GM12878 (cell line): ENCODE measurements at regions of chr7 and their contacts with region 1.

Region 1: GRCh38 chr7:101815835-101816493 is 1.5 kb upstream of the CUX1 start:
- DNase-seq: no peak
- ATAC-seq: peak; percentile 63
- H3K4me3 ChIP-seq: peak overlapping the region; percentile 53; the same call in 1 of the 2 replicates
- H3K27ac ChIP-seq: peak overlapping the region; percentile 68
- H3K4me1 ChIP-seq: peaks cover 4% of the 10 kb centered on the region; the same call in 1 of the 2 replicates
- H3K27me3 ChIP-seq: no peaks in the 10 kb centered on the region
- CTCF ChIP-seq: peak in 1 of 3 experiments; percentile 19; a peak in 2 of 6 replicates
- EP300 ChIP-seq: no peak
- POLR2A ChIP-seq: peak; percentile 69
- RAD21 ChIP-seq: no peak

Region 2: GRCh38 chr7:101542527-101543241 is 273.3 kb before region 1 on chr7:
- CTCF ChIA-PET with region 1: no interaction called
- POLR2A ChIA-PET with region 1: no interaction called
- RAD21 ChIA-PET with region 1: interaction called, 7 read pairs
- SMC1A ChIA-PET with region 1: no interaction called
- in situ Hi-C with region 1: no loop called
- intact Hi-C with region 1: loop called (anchors 10 kb)
- DNase-seq: peak; percentile 2
- ATAC-seq: peak; percentile 79
- H3K4me3 ChIP-seq: no peak overlapping the region
- H3K27ac ChIP-seq: no peak overlapping the region
- H3K4me1 ChIP-seq: no peaks in the 10 kb centered on the region
- H3K27me3 ChIP-seq: no peaks in the 10 kb centered on the region
- CTCF ChIP-seq: peak; percentile 80 to 85 (median 82)
- EP300 ChIP-seq: no peak
- POLR2A ChIP-seq: no peak
- RAD21 ChIP-seq: peak; percentile 92

Region 3: GRCh38 chr7:101688183-101688831 is 127.7 kb before region 1 on chr7:
- CTCF ChIA-PET with region 1: interaction called, 11 read pairs
- POLR2A ChIA-PET with region 1: interaction called, 3 read pairs
- RAD21 ChIA-PET with region 1: interaction called, 13 read pairs
- SMC1A ChIA-PET with region 1: interaction called, 12 read pairs
- in situ Hi-C with region 1: loop called (anchors 5 kb)
- intact Hi-C with region 1: loop called (anchors 1 kb)
- DNase-seq: no peak
- ATAC-seq: peak; percentile 97
- H3K4me3 ChIP-seq: peak overlapping the region; percentile 32; the same call in 1 of the 2 replicates
- H3K27ac ChIP-seq: peak overlapping the region; percentile 58
- H3K4me1 ChIP-seq: peaks cover 6% of the 10 kb centered on the region; the same call in 1 of the 2 replicates
- H3K27me3 ChIP-seq: no peaks in the 10 kb centered on the region
- CTCF ChIP-seq: peak; percentile 73 to 97 (median 79)
- EP300 ChIP-seq: no peak
- POLR2A ChIP-seq: no peak
- RAD21 ChIP-seq: peak; percentile 89

Region 4: DNA sequence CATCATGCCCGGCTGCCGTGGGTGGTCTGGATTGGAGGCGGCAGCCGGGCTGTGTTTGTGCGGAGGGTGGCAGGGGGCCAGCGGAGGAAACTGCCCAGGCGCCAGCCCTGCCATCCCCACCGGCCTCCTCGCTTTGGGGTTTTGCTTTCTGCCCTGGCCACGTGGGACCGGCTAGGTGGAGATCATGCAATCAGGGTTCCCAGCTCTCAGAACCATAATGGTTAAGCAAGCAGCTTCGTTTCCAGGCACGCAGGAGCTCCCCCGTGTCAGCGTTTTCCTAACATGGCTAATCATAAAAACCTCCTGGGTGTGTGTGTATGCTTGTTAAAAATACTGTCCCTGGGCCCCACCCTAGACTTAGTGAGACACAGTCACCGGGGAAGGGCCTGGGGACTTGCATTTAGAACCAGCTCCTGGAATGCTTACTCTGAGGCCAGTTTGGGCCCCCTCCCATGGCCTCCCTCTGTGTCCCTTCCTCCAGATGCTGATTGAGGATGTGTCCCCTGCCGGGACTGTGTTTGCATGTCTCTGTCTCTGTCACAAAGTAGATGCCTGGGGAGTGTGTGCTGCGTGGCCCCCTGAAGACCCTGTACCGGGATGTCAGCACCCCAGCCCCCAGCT is 120.8 kb after region 1 on chr7:
- CTCF ChIA-PET with region 1: no interaction called
- POLR2A ChIA-PET with region 1: no interaction called
- RAD21 ChIA-PET with region 1: interaction called, 4 read pairs
- SMC1A ChIA-PET with region 1: interaction called, 4 read pairs
- in situ Hi-C with region 1: no loop called
- intact Hi-C with region 1: loop called (anchors 5 kb)
- DNase-seq: no peak
- ATAC-seq: no peak
- H3K4me3 ChIP-seq: no peak overlapping the region
- H3K27ac ChIP-seq: no peak overlapping the region
- H3K4me1 ChIP-seq: peaks cover 63% of the 10 kb centered on the region
- H3K27me3 ChIP-seq: no peaks in the 10 kb centered on the region
- CTCF ChIP-seq: no peak
- EP300 ChIP-seq: no peak
- POLR2A ChIP-seq: no peak
- RAD21 ChIP-seq: no peak

Region 5: GRCh38 chr7:102236592-102237287 is 420.8 kb after region 1 on chr7:
- CTCF ChIA-PET with region 1: interaction called, 20 read pairs
- POLR2A ChIA-PET with region 1: no interaction called
- RAD21 ChIA-PET with region 1: interaction called, 4 read pairs
- SMC1A ChIA-PET with region 1: interaction called, 4 read pairs
- in situ Hi-C with region 1: no loop called
- intact Hi-C with region 1: loop called (anchors 2 kb)
- DNase-seq: no peak
- ATAC-seq: peak; percentile 91
- H3K4me3 ChIP-seq: no peak overlapping the region
- H3K27ac ChIP-seq: no peak overlapping the region
- H3K4me1 ChIP-seq: peaks cover 8% of the 10 kb centered on the region
- H3K27me3 ChIP-seq: no peaks in the 10 kb centered on the region
- CTCF ChIP-seq: peak; percentile 70 to 91 (median 77)
- EP300 ChIP-seq: no peak
- POLR2A ChIP-seq: no peak
- RAD21 ChIP-seq: peak; percentile 98